ENCODE measurements at regions of chr15 and their contacts with region 1.

Region 1: GRCh38 chr15:67296188-67296587 is 41.6 kb downstream of the IQCH start:
- DNase-seq: no peak
- ATAC-seq: no peak
- H3K4me3 Mint-ChIP-seq: no peak overlapping the region
- H3K27ac Mint-ChIP-seq: no peak overlapping the region
- H3K4me1 Mint-ChIP-seq: peaks cover 16% of the 10 kb centered on the region
- H3K27me3 Mint-ChIP-seq: no peaks in the 10 kb centered on the region
- CTCF ChIP-seq: no peak

Region 2: GRCh38 chr15:67085818-67086636 is 210.2 kb before region 1 on chr15:
- CTCF ChIA-PET with region 1: interaction called, 3 read pairs
- POLR2A ChIA-PET with region 1: interaction called, 10 read pairs
- intact Hi-C with region 1: no loop called
- DNase-seq: no peak
- ATAC-seq: peak; percentile 51
- H3K4me3 Mint-ChIP-seq: peak overlapping the region; percentile 59
- H3K27ac Mint-ChIP-seq: peak overlapping the region; percentile 95
- H3K4me1 Mint-ChIP-seq: peaks cover 100% of the 10 kb centered on the region
- H3K27me3 Mint-ChIP-seq: no peaks in the 10 kb centered on the region
- CTCF ChIP-seq: no peak

Measured in activated B cell treated with CpG ODN at 0.5 μM for 24 hours (primary cell).